ENCODE measurements at regions of chr1 and their contacts with region 1.

Region 1: GRCh38 chr1:61921435-61921834 is 179.2 kb downstream of the PATJ start:
- DNase-seq: no peak
- H3K4me3 ChIP-seq: no peak overlapping the region
- H3K27ac ChIP-seq: no peak overlapping the region
- H3K4me1 ChIP-seq: no peaks in the 10 kb centered on the region
- H3K27me3 ChIP-seq: no peaks in the 10 kb centered on the region
- CTCF ChIP-seq: peak in 1 of 2 donors; percentile 4
- POLR2A ChIP-seq: no peak

Region 2: GRCh38 chr1:62070384-62071011 is 149.1 kb after region 1 on chr1:
- CTCF ChIA-PET with region 1: no interaction called
- POLR2A ChIA-PET with region 1: no interaction called
- dilution Hi-C with region 1: no loop called
- intact Hi-C with region 1: loop called (anchors 1 kb)
- DNase-seq: peak; percentile 31
- H3K4me3 ChIP-seq: no peak overlapping the region
- H3K27ac ChIP-seq: no peak overlapping the region
- H3K4me1 ChIP-seq: no peaks in the 10 kb centered on the region
- H3K27me3 ChIP-seq: peaks cover 0 to 2% of the 10 kb centered on the region in 2 experiments
- CTCF ChIP-seq: peak; percentile 27 to 32
- POLR2A ChIP-seq: no peak

Region 3: DNA sequence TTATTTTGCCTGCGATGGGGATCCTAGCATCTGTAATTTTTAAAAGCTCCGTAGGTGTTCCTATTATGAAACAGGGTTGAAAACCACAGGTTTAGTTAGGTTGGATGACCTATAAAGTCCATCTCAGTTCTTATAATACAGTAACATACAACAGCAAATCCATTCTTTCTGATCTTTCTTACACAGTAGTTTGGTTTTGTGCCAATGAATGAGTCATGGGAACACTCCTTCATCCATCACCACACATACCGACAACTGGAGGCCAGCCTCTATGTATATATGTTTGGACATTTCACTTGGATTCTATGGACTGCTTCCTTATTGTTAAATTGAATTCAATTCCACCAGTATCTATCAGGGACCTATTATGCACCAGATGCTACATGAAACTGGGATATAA is 154.9 kb after region 1 on chr1:
- CTCF ChIA-PET with region 1: no interaction called
- POLR2A ChIA-PET with region 1: no interaction called
- dilution Hi-C with region 1: no loop called
- intact Hi-C with region 1: loop called (anchors 2 kb)
- DNase-seq: peak; percentile 78
- H3K4me3 ChIP-seq: no peak overlapping the region
- H3K27ac ChIP-seq: no peak overlapping the region
- H3K4me1 ChIP-seq: no peaks in the 10 kb centered on the region
- H3K27me3 ChIP-seq: peaks cover 0 to 2% of the 10 kb centered on the region in 2 experiments
- CTCF ChIP-seq: no peak
- POLR2A ChIP-seq: no peak